ENCODE measurements at regions of chr13 and their contacts with region 1.

Region 1: DNA sequence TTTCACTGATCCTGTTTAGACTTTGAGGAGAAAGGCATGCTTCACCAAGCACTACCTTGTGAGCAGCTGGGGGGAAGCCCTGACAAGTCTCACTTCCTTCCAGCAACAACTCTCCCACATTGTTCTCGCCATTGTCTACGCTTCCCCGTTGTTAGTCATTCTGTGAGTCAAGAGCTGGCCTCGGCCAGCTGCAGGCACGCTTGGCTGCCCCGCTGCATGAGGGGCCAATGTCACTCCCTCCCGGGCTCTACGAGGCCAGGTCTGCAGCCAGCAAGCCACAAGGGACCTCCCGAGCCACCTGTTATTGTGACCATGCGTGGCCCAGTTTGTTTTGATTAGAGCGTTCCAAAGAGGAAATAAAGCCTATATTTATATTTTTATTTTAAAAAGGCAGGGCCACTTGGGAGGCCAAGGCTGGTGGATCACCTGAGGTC is 220.9 kb downstream of the FOXO1 start:
- DNase-seq: peak; percentile 100
- H3K4me3 ChIP-seq: no peak overlapping the region
- H3K27ac ChIP-seq: peak overlapping the region; percentile 92
- H3K4me1 ChIP-seq: peaks cover 80% of the 10 kb centered on the region
- CTCF ChIP-seq: no peak

Region 2: GRCh38 chr13:39942552-39943273 is 502.9 kb before region 1 on chr13:
- CTCF ChIA-PET with region 1: no interaction called
- POLR2A ChIA-PET with region 1: no interaction called
- intact Hi-C with region 1: loop called (anchors 10 kb)
- DNase-seq: peak; percentile 86
- H3K4me3 ChIP-seq: no peak overlapping the region
- H3K27ac ChIP-seq: no peak overlapping the region
- H3K4me1 ChIP-seq: peaks cover 4% of the 10 kb centered on the region
- CTCF ChIP-seq: peak; percentile 100

Region 3: DNA sequence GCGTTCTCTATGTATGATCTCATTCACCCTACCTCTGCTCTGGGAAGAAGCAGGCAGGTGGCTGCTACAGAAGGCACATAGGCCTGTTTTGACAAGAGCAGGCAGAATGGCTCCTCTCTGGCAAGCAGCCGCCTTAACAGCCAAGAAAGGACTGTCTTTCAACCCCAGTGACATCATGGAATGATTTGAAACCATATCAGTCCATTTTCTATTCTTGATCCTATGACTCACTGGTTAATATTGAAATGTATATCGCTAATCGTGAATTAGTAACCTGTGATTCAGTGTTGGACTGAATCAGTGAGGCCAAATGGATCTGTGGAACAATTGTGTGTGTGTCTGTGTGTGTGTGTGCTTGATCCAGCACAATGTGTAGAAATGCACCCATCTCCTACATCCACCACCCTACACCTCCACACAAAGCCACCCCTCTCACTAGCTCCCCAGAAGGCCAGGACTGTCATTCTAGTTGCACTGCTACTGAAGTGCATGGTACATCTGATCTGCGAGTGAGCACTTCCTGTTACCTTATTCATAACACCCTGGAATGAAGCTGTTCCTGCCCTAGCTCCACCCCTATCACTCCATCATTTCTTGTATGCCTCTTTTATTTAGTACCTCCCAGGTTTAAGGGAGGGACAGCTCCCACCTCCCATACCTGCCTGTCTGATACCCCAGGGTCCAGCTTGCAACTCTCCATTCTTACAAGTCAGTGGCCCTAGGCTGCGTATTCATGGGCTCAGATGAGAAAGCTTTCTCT is 239.2 kb before region 1 on chr13:
- CTCF ChIA-PET with region 1: no interaction called
- POLR2A ChIA-PET with region 1: no interaction called
- intact Hi-C with region 1: loop called (anchors 1 kb)
- DNase-seq: peak; percentile 82
- H3K4me3 ChIP-seq: peak overlapping the region; percentile 30
- H3K27ac ChIP-seq: peak overlapping the region; percentile 91
- H3K4me1 ChIP-seq: peaks cover 51% of the 10 kb centered on the region
- CTCF ChIP-seq: no peak

Region 4: DNA sequence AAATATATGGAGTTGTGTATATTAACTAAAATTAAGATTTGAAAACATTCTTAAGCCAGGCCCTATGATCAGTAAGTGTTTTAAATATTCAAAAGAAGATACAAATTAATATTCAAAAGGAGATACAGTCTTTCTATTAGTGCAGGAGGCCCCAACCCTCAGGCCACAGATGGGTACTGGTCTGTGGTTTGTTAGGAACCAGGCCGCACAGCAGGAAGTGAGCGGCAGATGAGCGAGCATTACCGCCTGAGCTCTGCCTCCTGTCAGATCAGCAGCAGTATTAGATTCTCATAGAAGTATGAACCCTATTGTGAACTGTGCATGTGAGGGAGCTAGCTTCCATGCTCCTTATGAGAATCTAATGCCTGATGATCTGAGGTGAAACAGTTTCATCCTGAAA is 12.0 kb before region 1 on chr13:
- CTCF ChIA-PET with region 1: interaction called, 6 read pairs
- POLR2A ChIA-PET with region 1: interaction called, 57 read pairs
- intact Hi-C with region 1: loop called (anchors 1 kb)
- DNase-seq: peak; percentile 86
- H3K4me3 ChIP-seq: no peak overlapping the region
- H3K27ac ChIP-seq: peak overlapping the region; percentile 98
- H3K4me1 ChIP-seq: peaks cover 91% of the 10 kb centered on the region
- CTCF ChIP-seq: no peak

Region 5: GRCh38 chr13:40477623-40478608 is 32.3 kb after region 1 on chr13:
- CTCF ChIA-PET with region 1: interaction called, 4 read pairs
- POLR2A ChIA-PET with region 1: interaction called, 4 read pairs
- intact Hi-C with region 1: loop called (anchors 1 kb)
- DNase-seq: peak; percentile 54
- H3K4me3 ChIP-seq: peak overlapping the region; percentile 67
- H3K27ac ChIP-seq: peak overlapping the region; percentile 96
- H3K4me1 ChIP-seq: peaks cover 83% of the 10 kb centered on the region
- CTCF ChIP-seq: no peak

Region 6: GRCh38 chr13:40490086-40490758 is 44.6 kb after region 1 on chr13:
- CTCF ChIA-PET with region 1: no interaction called
- POLR2A ChIA-PET with region 1: no interaction called
- intact Hi-C with region 1: no loop called
- DNase-seq: no peak
- H3K4me3 ChIP-seq: no peak overlapping the region
- H3K27ac ChIP-seq: no peak overlapping the region
- H3K4me1 ChIP-seq: peaks cover 46% of the 10 kb centered on the region
- CTCF ChIP-seq: no peak

Region 7: GRCh38 chr13:40589285-40590109 is 143.9 kb after region 1 on chr13:
- CTCF ChIA-PET with region 1: no interaction called
- POLR2A ChIA-PET with region 1: interaction called, 4 read pairs
- intact Hi-C with region 1: loop called (anchors 2 kb)
- DNase-seq: peak; percentile 97
- H3K4me3 ChIP-seq: peak overlapping the region; percentile 63
- H3K27ac ChIP-seq: peak overlapping the region; percentile 92
- H3K4me1 ChIP-seq: peaks cover 97% of the 10 kb centered on the region
- CTCF ChIP-seq: no peak

Measured in OCI-LY7 (cell line).